ENCODE measurements at regions of chr19 and their contacts with region 1.

Region 1: DNA sequence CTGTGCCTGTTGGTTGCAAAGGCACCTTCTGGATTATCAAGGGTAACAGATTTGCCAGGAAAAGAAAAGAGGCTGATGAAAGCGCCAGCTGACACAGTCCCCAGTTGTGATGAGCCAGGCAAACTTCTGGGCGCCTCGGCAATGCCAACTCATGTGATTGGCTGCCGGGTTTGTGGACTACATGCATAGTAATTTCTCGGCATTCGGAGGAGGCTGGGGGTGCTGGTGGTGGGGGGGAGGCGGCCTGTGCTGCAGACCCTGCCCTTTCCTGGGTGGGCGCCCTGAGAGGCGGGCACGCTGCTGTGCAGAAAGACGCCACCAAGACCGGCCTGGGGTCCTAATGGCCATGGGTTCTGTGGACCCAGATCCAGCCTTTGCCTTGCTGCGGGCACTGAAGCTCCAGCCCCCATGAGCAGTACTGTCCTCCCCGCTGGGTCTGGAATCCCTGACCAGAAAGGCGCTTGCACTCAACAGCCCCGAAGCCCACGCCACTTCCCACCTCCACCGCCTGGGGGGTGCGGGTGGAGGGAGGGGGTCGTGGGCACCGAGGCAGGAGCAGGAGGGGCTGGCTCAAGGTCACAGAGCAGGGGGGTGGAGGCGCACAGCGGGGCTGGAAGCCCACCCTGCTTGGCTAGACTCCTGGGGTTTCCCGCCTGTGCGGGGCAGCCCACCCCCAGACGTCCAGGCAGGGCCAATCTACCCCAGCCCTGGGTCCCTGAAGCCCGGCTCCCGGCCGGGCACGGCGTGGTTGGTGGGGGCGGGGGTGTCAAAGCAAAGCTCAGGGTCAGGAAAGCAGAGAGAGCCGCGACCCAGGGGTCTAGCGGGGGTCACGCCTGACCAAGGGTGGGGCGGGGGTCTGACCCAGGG is 1.0 kb downstream of the DIRAS1 start:
- DNase-seq: peak; percentile 40
- ATAC-seq: no peak
- H3K4me3 ChIP-seq: peak overlapping the region; percentile 52
- H3K27ac ChIP-seq: no peak overlapping the region
- H3K4me1 ChIP-seq: peaks cover 17% of the 10 kb centered on the region
- H3K27me3 ChIP-seq: no peaks in the 10 kb centered on the region; the same call in 1 of the 2 replicates
- CTCF ChIP-seq: no peak
- POLR2A ChIP-seq: no peak
- RAD21 ChIP-seq: no peak

Region 2: GRCh38 chr19:2702162-2703076 is 17.7 kb before region 1 on chr19 and contains the start of gene GNG7:
- CTCF ChIA-PET with region 1: no interaction called
- POLR2A ChIA-PET with region 1: interaction called, 13 read pairs
- dilution Hi-C with region 1: no loop called
- in situ Hi-C with region 1: no loop called
- intact Hi-C with region 1: no loop called
- DNase-seq: peak; percentile 61
- ATAC-seq: peak; percentile 100
- H3K4me3 ChIP-seq: peak within 1 kb of the TSS; percentile 51
- H3K27ac ChIP-seq: no peak within 1 kb of the TSS
- H3K4me1 ChIP-seq: no peaks in the 10 kb centered on the region
- H3K27me3 ChIP-seq: peaks cover 38% of the 10 kb centered on the region
- CTCF ChIP-seq: no peak
- POLR2A ChIP-seq: no peak
- RAD21 ChIP-seq: no peak
- total RNA-seq, gene GNG7: under 0.01 TPM in 2 replicates